Calu3 (cell line): ENCODE measurements at regions of chr2 and their contacts with region 1.

Region 1: GRCh38 chr2:127455566-127456493 is 37.6 kb downstream of the PROC start:
- DNase-seq: no peak
- H3K4me3 Mint-ChIP-seq: peak overlapping the region; percentile 42
- H3K27ac Mint-ChIP-seq: peak overlapping the region; percentile 30
- H3K4me1 Mint-ChIP-seq: peaks cover 23% of the 10 kb centered on the region
- H3K27me3 Mint-ChIP-seq: no peaks in the 10 kb centered on the region
- CTCF ChIP-seq: no peak

Region 2: GRCh38 chr2:127355386-127356008 is 100.3 kb before region 1 on chr2:
- CTCF ChIA-PET with region 1: no interaction called
- intact Hi-C with region 1: loop called (anchors 5 kb)
- DNase-seq: peak; percentile 35
- H3K4me3 Mint-ChIP-seq: no peak overlapping the region
- H3K27ac Mint-ChIP-seq: no peak overlapping the region
- H3K4me1 Mint-ChIP-seq: peaks cover 8% of the 10 kb centered on the region
- H3K27me3 Mint-ChIP-seq: no peaks in the 10 kb centered on the region
- CTCF ChIP-seq: peak; percentile 48

Region 3: GRCh38 chr2:127560201-127560930 is 104.5 kb after region 1 on chr2:
- CTCF ChIA-PET with region 1: no interaction called
- intact Hi-C with region 1: no loop called
- DNase-seq: no peak
- H3K4me3 Mint-ChIP-seq: no peak overlapping the region
- H3K27ac Mint-ChIP-seq: no peak overlapping the region
- H3K4me1 Mint-ChIP-seq: no peaks in the 10 kb centered on the region
- H3K27me3 Mint-ChIP-seq: peaks cover 69% of the 10 kb centered on the region
- CTCF ChIP-seq: no peak

Region 4: GRCh38 chr2:127753374-127753773 is 297.5 kb after region 1 on chr2:
- CTCF ChIA-PET with region 1: no interaction called
- intact Hi-C with region 1: no loop called
- DNase-seq: no peak
- H3K4me3 Mint-ChIP-seq: no peak overlapping the region
- H3K27ac Mint-ChIP-seq: no peak overlapping the region
- H3K4me1 Mint-ChIP-seq: peaks cover 1% of the 10 kb centered on the region
- H3K27me3 Mint-ChIP-seq: no peaks in the 10 kb centered on the region
- CTCF ChIP-seq: no peak